PC-9 (cell line): ENCODE measurements at regions of chr17 and their contacts with region 1.

Region 1: GRCh38 chr17:54992797-54993639 is 24.5 kb downstream of the STXBP4 start:
- DNase-seq: peak; percentile 2 to 53
- H3K4me3 ChIP-seq: no peak overlapping the region
- H3K27ac ChIP-seq: no peak overlapping the region
- H3K4me1 ChIP-seq: no peaks in the 10 kb centered on the region
- H3K27me3 ChIP-seq: no peaks in the 10 kb centered on the region
- CTCF ChIP-seq: peak; percentile 86

Region 2: GRCh38 chr17:55295411-55296170 is 302.6 kb after region 1 on chr17:
- CTCF ChIA-PET with region 1: no interaction called
- POLR2A ChIA-PET with region 1: no interaction called
- intact Hi-C with region 1: loop called (anchors 2 kb)
- DNase-seq: peak in 1 of 2 experiments; percentile 45
- H3K4me3 ChIP-seq: no peak overlapping the region
- H3K27ac ChIP-seq: no peak overlapping the region
- H3K4me1 ChIP-seq: no peaks in the 10 kb centered on the region
- H3K27me3 ChIP-seq: no peaks in the 10 kb centered on the region
- CTCF ChIP-seq: peak; percentile 90

Region 3: GRCh38 chr17:55320594-55321426 is 327.8 kb after region 1 on chr17:
- CTCF ChIA-PET with region 1: no interaction called
- POLR2A ChIA-PET with region 1: no interaction called
- intact Hi-C with region 1: no loop called
- DNase-seq: no peak
- H3K4me3 ChIP-seq: no peak overlapping the region
- H3K27ac ChIP-seq: no peak overlapping the region
- H3K4me1 ChIP-seq: no peaks in the 10 kb centered on the region
- H3K27me3 ChIP-seq: peaks cover 13% of the 10 kb centered on the region; the same call in 1 of the 2 replicates
- CTCF ChIP-seq: no peak

Region 4: GRCh38 chr17:55348749-55349354 is 355.8 kb after region 1 on chr17:
- CTCF ChIA-PET with region 1: interaction called, 4 read pairs
- POLR2A ChIA-PET with region 1: no interaction called
- intact Hi-C with region 1: loop called (anchors 1 kb)
- DNase-seq: peak in 1 of 2 experiments; percentile 32
- H3K4me3 ChIP-seq: no peak overlapping the region
- H3K27ac ChIP-seq: no peak overlapping the region
- H3K4me1 ChIP-seq: no peaks in the 10 kb centered on the region
- H3K27me3 ChIP-seq: no peaks in the 10 kb centered on the region
- CTCF ChIP-seq: peak; percentile 86

Region 5: DNA sequence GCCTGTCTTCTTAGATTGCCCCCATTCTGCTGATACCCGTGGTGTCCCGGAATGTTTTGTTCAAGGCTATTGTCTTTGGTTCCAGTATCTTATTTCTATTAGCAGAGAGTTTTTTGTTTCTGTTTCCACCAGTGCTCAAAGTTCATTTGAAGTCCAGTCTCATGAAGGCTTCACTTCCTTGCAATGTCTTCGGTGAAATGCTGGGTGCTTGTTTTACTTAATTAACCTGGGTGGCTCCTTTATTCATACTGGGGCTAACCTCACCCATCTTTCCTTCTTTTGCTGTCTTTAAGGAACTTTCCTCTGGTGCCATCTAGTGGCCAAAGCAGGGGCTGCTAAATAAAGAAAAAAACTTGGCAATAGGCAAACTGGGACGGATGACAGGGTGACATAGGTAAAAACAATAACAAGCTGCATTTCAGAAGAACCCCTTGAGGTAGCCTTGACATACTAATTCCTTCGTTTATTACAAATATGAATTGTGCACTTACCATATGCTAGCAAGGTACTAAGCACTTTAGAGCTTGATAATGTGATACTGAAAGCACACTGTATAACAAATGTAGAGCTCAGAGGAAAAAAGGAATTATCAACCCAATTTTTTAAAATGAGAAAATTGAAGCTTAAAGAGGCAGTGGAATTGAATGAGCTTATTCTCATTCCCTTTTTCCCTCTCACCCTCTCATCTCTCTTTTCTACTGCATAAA is 521.0 kb after region 1 on chr17:
- CTCF ChIA-PET with region 1: no interaction called
- POLR2A ChIA-PET with region 1: no interaction called
- intact Hi-C with region 1: loop called (anchors 1 kb)
- DNase-seq: peak; percentile 64 to 68
- H3K4me3 ChIP-seq: no peak overlapping the region
- H3K27ac ChIP-seq: no peak overlapping the region
- H3K4me1 ChIP-seq: no peaks in the 10 kb centered on the region
- H3K27me3 ChIP-seq: 0 out of 2 replicates have a peak, but pooled peaks cover 3% of the 10 kb centered on the region
- CTCF ChIP-seq: peak; percentile 97